GM12878 (cell line): ENCODE measurements at regions of chr12 and their contacts with region 1.

Region 1: DNA sequence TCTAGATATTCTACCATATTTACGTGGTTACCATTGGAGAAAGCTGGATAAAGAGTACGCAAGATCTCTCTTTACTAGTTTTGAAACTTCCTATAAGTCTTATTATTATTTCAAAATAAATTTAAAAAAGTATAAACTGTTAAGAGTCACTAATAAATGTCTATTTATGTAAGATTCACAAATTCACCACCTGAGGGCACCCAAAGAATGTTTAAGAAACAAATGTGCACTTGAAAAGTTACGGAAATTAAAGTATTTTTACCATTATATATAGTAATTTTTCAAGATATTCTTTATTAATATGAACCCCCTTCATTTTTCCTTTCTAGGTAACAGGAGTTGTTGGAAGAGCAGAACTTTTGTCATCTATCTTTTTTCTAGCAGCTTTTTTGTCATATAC is 11.9 kb downstream of the TMTC3 start:
- DNase-seq: no peak
- ATAC-seq: 0 out of 3 replicates have a peak, but pooled peaks have one; percentile 25
- H3K4me3 ChIP-seq: no peak overlapping the region
- H3K27ac ChIP-seq: no peak overlapping the region
- H3K4me1 ChIP-seq: no peaks in the 10 kb centered on the region
- H3K27me3 ChIP-seq: no peaks in the 10 kb centered on the region
- CTCF ChIP-seq: peak in 1 of 3 experiments; percentile 17; a peak in 1 of 6 replicates
- EP300 ChIP-seq: no peak
- POLR2A ChIP-seq: no peak
- RAD21 ChIP-seq: peak; percentile 46; the same call in 1 of the 2 replicates

Region 2: GRCh38 chr12:88638966-88639760 is 485.2 kb after region 1 on chr12:
- CTCF ChIA-PET with region 1: no interaction called
- POLR2A ChIA-PET with region 1: no interaction called
- RAD21 ChIA-PET with region 1: no interaction called
- SMC1A ChIA-PET with region 1: interaction called, 3 read pairs
- in situ Hi-C with region 1: no loop called
- intact Hi-C with region 1: loop called (anchors 10 kb)
- DNase-seq: no peak
- ATAC-seq: no peak
- H3K4me3 ChIP-seq: no peak overlapping the region
- H3K27ac ChIP-seq: no peak overlapping the region
- H3K4me1 ChIP-seq: no peaks in the 10 kb centered on the region
- H3K27me3 ChIP-seq: no peaks in the 10 kb centered on the region
- CTCF ChIP-seq: no peak
- EP300 ChIP-seq: no peak
- POLR2A ChIP-seq: no peak
- RAD21 ChIP-seq: no peak